ENCODE measurements at regions of chr19 and their contacts with region 1.

Region 1: DNA sequence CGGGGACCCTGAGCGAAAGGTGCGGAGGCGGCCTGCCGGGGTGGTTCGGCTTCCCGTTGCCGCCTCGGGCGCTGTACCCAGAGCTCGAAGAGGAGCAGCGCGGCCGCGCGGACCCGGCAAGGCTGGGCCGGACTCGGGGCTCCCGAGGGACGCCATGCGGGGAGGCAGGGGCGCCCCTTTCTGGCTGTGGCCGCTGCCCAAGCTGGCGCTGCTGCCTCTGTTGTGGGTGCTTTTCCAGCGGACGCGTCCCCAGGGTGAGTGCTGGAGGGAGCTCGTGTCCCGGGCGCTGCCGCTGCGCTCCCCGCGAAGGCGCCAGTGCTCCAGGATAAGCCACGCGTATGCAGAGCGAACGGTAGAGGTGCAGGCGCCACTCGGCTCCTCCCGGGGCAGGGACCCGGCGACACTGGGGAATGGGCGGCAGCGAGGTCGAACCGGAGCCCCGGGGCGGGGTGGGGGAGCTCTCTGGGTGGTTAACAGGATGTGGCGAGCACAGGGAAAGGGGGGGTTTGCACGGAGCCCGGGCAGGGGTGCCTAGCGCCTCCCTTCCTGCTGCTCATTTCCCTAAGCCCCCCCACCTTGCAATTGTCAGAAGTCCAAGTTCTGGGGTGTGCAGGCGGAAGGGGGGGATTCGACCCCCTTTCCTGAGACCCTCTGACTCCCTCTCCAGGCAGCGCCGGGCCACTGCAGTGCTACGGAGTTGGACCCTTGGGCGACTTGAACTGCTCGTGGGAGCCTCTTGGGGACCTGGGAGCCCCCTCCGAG is at the start of gene IL27RA:
- DNase-seq: peak; percentile 84
- ATAC-seq: peak; percentile 72
- H3K4me3 ChIP-seq: peak within 1 kb of the TSS; percentile 26 to 95 (median 83)
- H3K4me3 Mint-ChIP-seq: peak within 1 kb of the TSS; percentile 94
- H3K27ac ChIP-seq: peak within 1 kb of the TSS; percentile 83 to 94
- H3K27ac Mint-ChIP-seq: peak within 1 kb of the TSS; percentile 94
- H3K4me1 ChIP-seq: peaks cover 22 to 42% of the 10 kb centered on the region in 2 donors
- H3K4me1 Mint-ChIP-seq: peaks cover 38% of the 10 kb centered on the region
- H3K27me3 ChIP-seq: no peaks in the 10 kb centered on the region
- H3K27me3 Mint-ChIP-seq: no peaks in the 10 kb centered on the region
- CTCF ChIP-seq: peak; percentile 68
- total RNA-seq, gene IL27RA: 38.2 and 38.6 TPM in 2 replicates

Region 2: GRCh38 chr19:13952154-13953035 is 79.5 kb before region 1 on chr19 and contains the start of gene DCAF15:
- CTCF ChIA-PET with region 1: interaction called, 5 read pairs
- POLR2A ChIA-PET with region 1: interaction called, 12 read pairs
- intact Hi-C with region 1: loop called (anchors 2 kb)
- DNase-seq: peak; percentile 100
- ATAC-seq: peak; percentile 95
- H3K4me3 ChIP-seq: peak within 1 kb of the TSS; percentile 55 to 98 (median 76)
- H3K4me3 Mint-ChIP-seq: peak within 1 kb of the TSS; percentile 96
- H3K27ac ChIP-seq: peak within 1 kb of the TSS; percentile 34 to 85
- H3K27ac Mint-ChIP-seq: peak within 1 kb of the TSS; percentile 96
- H3K4me1 ChIP-seq: peaks cover 15 to 18% of the 10 kb centered on the region in 2 donors
- H3K4me1 Mint-ChIP-seq: peaks cover 21% of the 10 kb centered on the region
- H3K27me3 ChIP-seq: no peaks in the 10 kb centered on the region
- H3K27me3 Mint-ChIP-seq: no peaks in the 10 kb centered on the region
- CTCF ChIP-seq: no peak
- total RNA-seq, gene DCAF15: 115 and 116 TPM in 2 replicates

Region 3: GRCh38 chr19:13959962-13960862 is 71.7 kb before region 1 on chr19:
- CTCF ChIA-PET with region 1: interaction called, 16 read pairs
- POLR2A ChIA-PET with region 1: interaction called, 3 read pairs
- intact Hi-C with region 1: no loop called
- DNase-seq: peak; percentile 45
- ATAC-seq: peak; percentile 70
- H3K4me3 ChIP-seq: no peak overlapping the region
- H3K4me3 Mint-ChIP-seq: no peak overlapping the region
- H3K27ac ChIP-seq: no peak overlapping the region
- H3K27ac Mint-ChIP-seq: peak overlapping the region; percentile 41
- H3K4me1 ChIP-seq: no peaks in the 10 kb centered on the region
- H3K4me1 Mint-ChIP-seq: no peaks in the 10 kb centered on the region
- H3K27me3 ChIP-seq: no peaks in the 10 kb centered on the region
- H3K27me3 Mint-ChIP-seq: no peaks in the 10 kb centered on the region
- CTCF ChIP-seq: peak; percentile 28

Region 4: GRCh38 chr19:13986348-13986904 is 45.5 kb before region 1 on chr19:
- CTCF ChIA-PET with region 1: interaction called, 29 read pairs
- POLR2A ChIA-PET with region 1: interaction called, 12 read pairs
- intact Hi-C with region 1: loop called (anchors 1 kb)
- DNase-seq: peak; percentile 98
- ATAC-seq: peak; percentile 82
- H3K4me3 ChIP-seq: peak overlapping the region; percentile 9 to 54 (median 35)
- H3K4me3 Mint-ChIP-seq: peak overlapping the region; percentile 71
- H3K27ac ChIP-seq: peak overlapping the region; percentile 95 to 99
- H3K27ac Mint-ChIP-seq: peak overlapping the region; percentile 99
- H3K4me1 ChIP-seq: peaks cover 59 to 69% of the 10 kb centered on the region in 2 donors
- H3K4me1 Mint-ChIP-seq: peaks cover 67% of the 10 kb centered on the region
- H3K27me3 ChIP-seq: no peaks in the 10 kb centered on the region
- H3K27me3 Mint-ChIP-seq: no peaks in the 10 kb centered on the region
- CTCF ChIP-seq: no peak

Region 5: DNA sequence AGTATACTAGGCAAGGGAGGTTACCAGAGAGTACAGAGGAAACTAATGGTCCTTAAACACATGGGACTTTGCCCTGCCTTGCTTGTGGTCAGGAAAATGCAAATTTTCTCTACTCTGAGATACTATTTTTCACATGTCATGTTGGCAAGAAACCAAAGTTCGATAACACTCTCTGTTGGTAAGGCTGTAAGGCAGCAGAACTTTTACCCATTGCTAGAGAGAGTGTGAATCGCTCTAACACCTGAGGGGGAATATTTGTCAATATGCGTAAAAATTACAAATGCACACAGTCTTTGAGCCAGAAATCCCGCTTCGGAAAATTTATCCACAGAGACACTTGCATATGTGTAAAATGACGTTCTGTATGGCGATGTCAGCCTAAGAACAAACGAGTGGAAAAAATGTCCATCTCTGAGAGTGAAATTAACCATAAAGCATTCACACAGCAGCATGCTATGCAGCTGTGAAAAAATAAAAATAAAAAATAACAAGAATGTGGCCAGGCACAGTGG is 16.3 kb before region 1 on chr19:
- CTCF ChIA-PET with region 1: interaction called, 30 read pairs
- POLR2A ChIA-PET with region 1: interaction called, 17 read pairs
- intact Hi-C with region 1: loop called (anchors 1 kb)
- DNase-seq: peak; percentile 78
- ATAC-seq: peak; percentile 76
- H3K4me3 ChIP-seq: peak overlapping the region in 3 of 5 experiments; percentile 20 to 58 (median 29)
- H3K4me3 Mint-ChIP-seq: peak overlapping the region; percentile 82
- H3K27ac ChIP-seq: peak overlapping the region; percentile 7 to 56
- H3K27ac Mint-ChIP-seq: peak overlapping the region; percentile 88
- H3K4me1 ChIP-seq: peaks cover 28 to 57% of the 10 kb centered on the region in 2 donors
- H3K4me1 Mint-ChIP-seq: peaks cover 37% of the 10 kb centered on the region
- H3K27me3 ChIP-seq: no peaks in the 10 kb centered on the region
- H3K27me3 Mint-ChIP-seq: no peaks in the 10 kb centered on the region
- CTCF ChIP-seq: no peak

Region 6: DNA sequence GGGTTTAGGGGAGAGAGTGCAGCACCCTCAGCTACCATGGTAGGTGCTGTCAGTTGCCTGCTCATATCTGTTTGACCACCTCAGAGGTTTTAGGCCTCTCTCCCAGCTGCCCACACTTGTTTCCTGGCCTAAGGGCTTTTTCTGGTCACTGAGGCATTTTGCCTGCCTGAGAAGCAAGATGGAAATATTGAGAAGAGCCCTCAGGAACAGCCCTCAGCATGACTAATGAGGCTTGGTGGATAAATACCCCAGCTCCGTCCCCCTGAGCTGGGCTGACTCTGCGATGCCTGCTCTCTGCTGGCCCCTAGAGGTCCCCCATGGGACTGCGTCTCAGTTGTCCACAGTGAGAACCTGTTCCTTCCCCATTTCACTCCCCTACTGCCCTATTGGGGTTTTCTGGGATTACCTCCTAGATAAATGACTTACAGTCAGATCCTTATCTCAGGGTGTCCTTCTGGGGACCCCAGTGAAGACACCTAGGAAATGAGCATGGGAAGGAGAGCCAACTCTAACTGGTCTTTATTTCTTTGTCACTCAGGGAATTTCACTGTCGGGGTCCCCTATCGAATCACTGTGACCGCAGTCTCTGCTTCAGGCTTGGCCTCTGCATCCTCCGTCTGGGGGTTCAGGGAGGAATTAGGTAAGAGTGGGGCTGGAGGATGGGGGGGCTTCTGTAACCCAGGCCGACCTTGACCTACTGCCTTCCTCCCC is 16.7 kb after region 1 on chr19:
- CTCF ChIA-PET with region 1: interaction called, 17 read pairs
- POLR2A ChIA-PET with region 1: interaction called, 5 read pairs
- intact Hi-C with region 1: no loop called
- DNase-seq: peak; percentile 80
- ATAC-seq: peak; percentile 92
- H3K4me3 ChIP-seq: no peak overlapping the region
- H3K4me3 Mint-ChIP-seq: no peak overlapping the region
- H3K27ac ChIP-seq: no peak overlapping the region
- H3K27ac Mint-ChIP-seq: no peak overlapping the region
- H3K4me1 ChIP-seq: no peaks in the 10 kb centered on the region
- H3K4me1 Mint-ChIP-seq: no peaks in the 10 kb centered on the region
- H3K27me3 ChIP-seq: no peaks in the 10 kb centered on the region
- H3K27me3 Mint-ChIP-seq: no peaks in the 10 kb centered on the region
- CTCF ChIP-seq: peak; percentile 95